AG04450 (cell line): ENCODE measurements at regions of chr1 and their contacts with region 1.

Region 1: DNA sequence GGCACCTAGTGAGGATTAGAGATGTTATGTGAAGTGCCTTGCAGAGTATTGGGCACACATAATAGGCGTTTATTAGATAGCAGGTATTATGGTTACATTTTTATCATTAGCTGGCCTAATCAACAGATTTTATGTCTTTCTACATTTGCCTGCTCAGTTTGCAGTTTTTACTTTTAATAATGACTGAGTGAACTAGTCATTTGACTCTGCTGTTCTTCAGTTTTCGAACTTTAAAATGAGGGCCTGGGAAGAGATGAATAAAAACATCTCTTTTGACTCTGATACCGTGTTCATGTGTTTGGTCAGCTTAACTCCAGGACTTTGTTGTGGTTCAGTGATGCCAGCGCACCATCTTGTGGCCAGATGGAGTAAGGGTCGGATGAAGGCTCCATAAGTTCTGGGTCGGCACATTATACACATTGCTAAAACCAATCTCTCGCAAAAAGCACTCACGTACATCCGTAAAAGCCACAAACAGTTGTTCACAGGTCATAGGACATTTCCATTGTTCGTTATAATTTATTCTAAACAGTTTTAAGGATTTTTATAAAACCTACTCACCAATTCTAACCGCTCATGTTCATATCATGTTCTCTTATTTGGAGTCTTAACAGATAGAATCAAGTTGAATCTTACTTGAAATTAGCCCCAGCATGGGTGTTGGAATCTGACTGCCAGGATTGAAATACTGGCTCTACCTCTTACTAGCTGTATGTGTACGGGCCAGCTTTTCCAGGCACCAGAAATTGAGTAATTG is 78.4 kb upstream of the GPR88 start:
- DNase-seq: peak; percentile 71
- H3K4me3 ChIP-seq: no peak overlapping the region
- H3K27ac ChIP-seq: no peak overlapping the region
- H3K27me3 ChIP-seq: no peaks in the 10 kb centered on the region
- CTCF ChIP-seq: peak; percentile 91

Region 2: DNA sequence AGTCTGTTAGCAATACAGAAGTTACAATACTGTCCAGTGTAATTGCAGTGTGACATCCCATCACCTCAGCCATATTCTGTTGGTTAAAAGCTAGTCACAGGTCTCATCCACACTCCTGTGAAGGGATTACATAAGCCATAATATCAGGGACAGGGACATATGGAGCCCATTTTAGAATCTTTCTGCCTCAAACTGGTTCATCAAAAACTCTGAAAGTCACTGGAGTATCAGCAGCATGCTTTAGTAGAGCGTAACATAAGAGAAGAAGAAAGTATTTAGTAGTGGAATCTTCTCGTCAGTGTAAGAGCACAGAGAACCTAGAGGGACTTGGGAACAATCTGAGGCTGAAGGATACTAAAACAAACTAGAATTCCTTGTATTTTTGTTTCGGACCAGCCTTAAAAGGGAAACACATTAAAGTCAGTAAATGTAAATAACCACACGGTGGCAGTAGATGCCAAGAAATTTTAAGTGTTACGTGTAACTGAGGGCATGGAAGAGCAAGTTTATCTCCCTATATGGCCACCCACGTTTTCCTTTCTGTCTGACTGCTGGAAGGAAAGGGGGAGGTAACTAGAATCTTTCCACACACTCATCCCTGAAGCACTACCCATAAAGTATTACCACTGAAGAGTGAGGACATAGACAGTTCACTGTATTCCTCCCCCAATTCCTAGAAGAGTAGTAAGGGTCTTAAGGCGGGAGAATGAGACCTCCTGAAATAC is 651.0 kb before region 1 on chr1:
- CTCF ChIA-PET with region 1: interaction called, 18 read pairs
- POLR2A ChIA-PET with region 1: no interaction called
- DNase-seq: peak; percentile 91
- H3K4me3 ChIP-seq: peak overlapping the region; percentile 33; the same call in 1 of the 2 replicates
- H3K27ac ChIP-seq: no peak overlapping the region
- H3K27me3 ChIP-seq: no peaks in the 10 kb centered on the region
- CTCF ChIP-seq: peak; percentile 62

Region 3: DNA sequence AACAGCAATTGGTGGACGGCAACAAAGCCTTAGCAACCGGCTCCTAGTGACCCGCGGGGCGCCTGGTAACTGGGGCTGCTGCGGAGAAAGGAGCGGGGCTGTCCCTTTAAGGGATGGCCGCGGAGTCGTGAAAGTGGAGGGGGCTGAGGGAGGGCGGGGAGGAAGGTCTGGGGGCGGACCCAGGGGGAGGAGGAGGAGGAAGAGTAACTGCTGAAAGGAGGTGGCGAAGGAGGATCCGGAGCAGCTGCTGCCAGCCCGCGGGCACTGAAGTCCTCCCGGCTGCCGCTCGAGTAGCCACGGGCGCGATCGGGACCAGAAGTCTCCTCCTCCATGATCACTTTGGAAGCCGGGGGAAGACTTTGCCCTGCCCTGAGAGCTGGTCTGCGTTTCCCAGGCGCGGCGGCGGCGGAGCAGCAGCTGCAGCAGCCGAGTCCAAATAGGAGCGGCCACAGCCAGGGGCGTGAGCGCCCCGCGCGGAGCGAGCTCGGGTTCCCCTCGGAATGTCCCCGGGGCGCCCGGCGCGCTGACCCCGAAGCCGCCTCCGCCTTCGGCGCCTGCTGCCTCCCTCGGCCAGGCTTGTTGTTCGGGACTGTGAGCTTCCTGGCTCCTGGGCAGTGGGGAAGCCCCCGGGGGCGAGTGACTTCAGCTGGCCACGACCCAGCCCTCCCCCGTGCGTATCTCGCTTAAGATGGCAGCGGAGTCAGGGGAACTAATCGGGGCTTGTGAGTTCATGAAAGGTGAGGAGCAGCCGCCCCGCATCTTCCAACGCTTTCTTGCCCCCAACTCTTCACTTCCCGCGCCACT is 107.1 kb before region 1 on chr1 and contains the start of gene CDC14A:
- CTCF ChIA-PET with region 1: interaction called, 11 read pairs
- POLR2A ChIA-PET with region 1: interaction called, 3 read pairs
- DNase-seq: peak; percentile 85
- H3K4me3 ChIP-seq: peak within 1 kb of the TSS; percentile 88
- H3K27ac ChIP-seq: peak within 1 kb of the TSS; percentile 72
- H3K27me3 ChIP-seq: no peaks in the 10 kb centered on the region
- CTCF ChIP-seq: no peak
- polyA plus RNA-seq, gene CDC14A: 2.2 and 2.8 TPM in 2 replicates

Region 4: GRCh38 chr1:100433563-100433962 is 26.0 kb before region 1 on chr1:
- CTCF ChIA-PET with region 1: interaction called, 10 read pairs
- POLR2A ChIA-PET with region 1: no interaction called
- DNase-seq: no peak
- H3K4me3 ChIP-seq: no peak overlapping the region
- H3K27ac ChIP-seq: no peak overlapping the region
- H3K27me3 ChIP-seq: no peaks in the 10 kb centered on the region
- CTCF ChIP-seq: no peak

Region 5: GRCh38 chr1:100469578-100469977 is 10.0 kb after region 1 on chr1:
- CTCF ChIA-PET with region 1: interaction called, 16 read pairs
- POLR2A ChIA-PET with region 1: no interaction called
- DNase-seq: no peak
- H3K4me3 ChIP-seq: no peak overlapping the region
- H3K27ac ChIP-seq: no peak overlapping the region
- H3K27me3 ChIP-seq: no peaks in the 10 kb centered on the region
- CTCF ChIP-seq: no peak

Region 6: DNA sequence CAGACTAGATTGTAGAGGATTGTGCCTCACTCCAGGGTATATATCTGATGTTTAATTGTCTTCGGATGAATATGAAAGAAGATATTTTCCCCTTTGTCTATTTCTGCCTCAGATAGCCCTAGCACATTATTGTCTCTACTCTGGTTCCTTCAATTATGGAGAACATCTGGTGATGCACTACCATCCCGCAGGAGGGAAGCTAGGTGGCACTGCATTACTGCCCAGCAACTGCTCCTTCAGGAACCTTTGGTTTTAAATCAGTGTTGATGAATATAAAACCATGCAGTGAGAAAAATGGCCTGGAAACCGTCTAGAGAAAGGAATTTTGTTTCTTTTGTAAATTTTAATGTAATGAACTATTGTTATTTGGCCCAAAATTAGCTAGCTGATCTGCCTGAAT is 146.9 kb after region 1 on chr1:
- CTCF ChIA-PET with region 1: interaction called, 11 read pairs
- POLR2A ChIA-PET with region 1: no interaction called
- DNase-seq: no peak
- H3K4me3 ChIP-seq: no peak overlapping the region
- H3K27ac ChIP-seq: no peak overlapping the region
- H3K27me3 ChIP-seq: no peaks in the 10 kb centered on the region
- CTCF ChIP-seq: peak; percentile 84

Region 7: GRCh38 chr1:100866041-100866900 is 406.7 kb after region 1 on chr1:
- CTCF ChIA-PET with region 1: interaction called, 481 read pairs
- POLR2A ChIA-PET with region 1: no interaction called
- DNase-seq: no peak
- H3K4me3 ChIP-seq: no peak overlapping the region
- H3K27ac ChIP-seq: no peak overlapping the region
- H3K27me3 ChIP-seq: no peaks in the 10 kb centered on the region
- CTCF ChIP-seq: peak; percentile 60